Calu3 (cell line): ENCODE measurements at regions of chr16 and their contacts with region 1.

Region 1: DNA sequence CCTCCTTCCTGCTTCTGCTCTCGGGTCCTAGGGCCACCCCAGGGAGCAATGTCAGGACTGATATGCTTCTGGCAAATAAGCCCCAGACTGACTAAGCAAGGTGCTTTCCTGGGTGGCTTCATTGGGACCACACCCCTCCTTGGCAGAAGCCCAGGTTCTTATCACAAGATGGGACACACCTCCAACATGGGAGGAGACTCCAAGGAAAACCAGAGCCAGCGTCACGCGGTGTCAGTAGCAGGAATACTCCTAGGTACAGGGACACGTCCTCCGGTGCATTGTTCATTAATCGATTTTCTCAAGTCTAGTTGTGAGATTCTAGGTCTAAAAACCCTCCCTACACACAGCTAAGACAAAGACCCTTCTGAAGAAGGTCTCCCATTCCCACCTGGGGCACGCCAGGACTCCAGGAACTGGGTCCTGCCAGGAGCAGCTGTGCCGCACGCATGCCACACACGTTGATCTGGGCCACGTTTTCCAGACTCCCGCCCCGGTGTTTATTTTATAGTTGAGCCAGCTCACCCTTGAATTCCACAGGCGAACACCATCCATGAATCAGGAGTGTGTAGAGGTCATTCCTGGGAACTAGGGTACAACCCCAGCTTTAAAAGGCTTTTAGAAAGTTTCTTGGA is 30.8 kb downstream of the FA2H start:
- DNase-seq: peak; percentile 98
- H3K4me3 Mint-ChIP-seq: peak overlapping the region; percentile 60
- H3K27ac Mint-ChIP-seq: peak overlapping the region; percentile 96
- H3K4me1 Mint-ChIP-seq: peaks cover 65% of the 10 kb centered on the region
- H3K27me3 Mint-ChIP-seq: no peaks in the 10 kb centered on the region
- CTCF ChIP-seq: no peak

Region 2: DNA sequence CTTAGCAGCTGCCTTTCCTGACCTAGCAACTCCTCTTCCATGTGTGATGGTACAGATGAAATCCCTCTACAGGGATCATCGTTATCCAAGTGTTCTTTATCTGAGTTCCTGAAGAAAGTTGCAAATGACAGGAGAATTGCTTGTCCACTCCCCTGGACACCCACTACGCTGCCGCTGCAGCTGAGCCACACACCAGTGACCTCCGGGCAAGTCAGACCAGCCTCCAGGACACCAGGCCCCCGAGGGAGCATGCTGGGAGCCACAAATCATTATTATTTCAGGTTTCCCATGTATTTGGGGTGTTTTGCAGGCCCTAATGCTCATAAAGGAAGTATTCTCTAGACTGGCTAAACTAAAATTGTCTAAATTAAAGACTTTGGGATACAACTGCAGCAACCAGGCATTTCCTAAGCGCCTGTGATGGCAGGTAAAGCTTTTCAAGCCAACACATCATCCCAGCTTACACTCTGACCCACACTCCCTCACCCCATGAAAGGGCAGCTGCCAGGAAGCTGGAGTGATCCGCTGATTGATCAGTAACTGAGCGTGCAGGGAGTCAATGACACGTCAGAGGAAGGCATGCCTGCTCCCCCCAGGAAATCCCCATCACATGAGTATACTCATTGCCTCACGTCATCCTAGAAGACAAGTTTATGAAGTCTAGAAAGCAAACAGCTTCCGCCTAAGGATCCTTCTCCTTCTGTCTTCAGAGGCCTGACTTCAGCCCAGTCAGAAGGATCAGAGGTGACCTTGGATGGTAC is 16.4 kb after region 1 on chr16:
- CTCF ChIA-PET with region 1: interaction called, 5 read pairs
- intact Hi-C with region 1: loop called (anchors 1 kb)
- DNase-seq: peak; percentile 91
- H3K4me3 Mint-ChIP-seq: peak overlapping the region; percentile 9
- H3K27ac Mint-ChIP-seq: peak overlapping the region; percentile 98
- H3K4me1 Mint-ChIP-seq: peaks cover 73% of the 10 kb centered on the region
- H3K27me3 Mint-ChIP-seq: no peaks in the 10 kb centered on the region
- CTCF ChIP-seq: no peak

Region 3: DNA sequence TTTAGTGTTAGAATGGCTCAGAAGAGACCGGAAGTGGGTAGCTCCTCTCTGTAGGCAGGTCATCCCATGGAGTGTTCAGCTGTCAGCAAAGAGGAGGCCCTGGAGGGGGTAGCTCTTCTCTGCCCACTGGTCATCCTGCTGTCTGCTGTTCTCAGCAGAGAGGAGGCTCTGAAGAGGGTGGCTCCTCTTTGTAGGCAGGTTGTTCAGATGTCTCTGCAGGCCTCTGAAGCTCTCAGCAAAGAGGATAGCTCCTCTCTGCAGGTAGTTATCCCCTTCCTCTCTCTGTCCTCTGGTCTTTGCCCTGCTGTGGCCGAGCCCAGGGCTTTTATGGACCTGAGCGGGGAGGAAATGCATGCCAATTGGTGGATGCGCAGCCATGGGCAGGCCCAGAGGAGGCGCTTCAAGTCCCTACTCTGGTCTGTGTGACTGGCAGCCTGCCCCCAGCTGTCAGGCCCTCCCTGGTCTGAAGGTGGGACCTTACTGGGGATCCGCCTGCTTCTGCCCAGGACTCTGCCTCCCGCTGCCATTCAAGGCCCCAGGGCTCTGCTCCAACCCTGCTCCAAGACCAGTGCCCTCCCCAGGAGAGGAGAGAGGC is 63.4 kb after region 1 on chr16:
- CTCF ChIA-PET with region 1: no interaction called
- intact Hi-C with region 1: no loop called
- DNase-seq: no peak
- H3K4me3 Mint-ChIP-seq: no peak overlapping the region
- H3K27ac Mint-ChIP-seq: no peak overlapping the region
- H3K4me1 Mint-ChIP-seq: no peaks in the 10 kb centered on the region
- H3K27me3 Mint-ChIP-seq: no peaks in the 10 kb centered on the region
- CTCF ChIP-seq: no peak